Caco-2 (cell line): ENCODE measurements at regions of chr3 and their contacts with region 1.

Region 1: DNA sequence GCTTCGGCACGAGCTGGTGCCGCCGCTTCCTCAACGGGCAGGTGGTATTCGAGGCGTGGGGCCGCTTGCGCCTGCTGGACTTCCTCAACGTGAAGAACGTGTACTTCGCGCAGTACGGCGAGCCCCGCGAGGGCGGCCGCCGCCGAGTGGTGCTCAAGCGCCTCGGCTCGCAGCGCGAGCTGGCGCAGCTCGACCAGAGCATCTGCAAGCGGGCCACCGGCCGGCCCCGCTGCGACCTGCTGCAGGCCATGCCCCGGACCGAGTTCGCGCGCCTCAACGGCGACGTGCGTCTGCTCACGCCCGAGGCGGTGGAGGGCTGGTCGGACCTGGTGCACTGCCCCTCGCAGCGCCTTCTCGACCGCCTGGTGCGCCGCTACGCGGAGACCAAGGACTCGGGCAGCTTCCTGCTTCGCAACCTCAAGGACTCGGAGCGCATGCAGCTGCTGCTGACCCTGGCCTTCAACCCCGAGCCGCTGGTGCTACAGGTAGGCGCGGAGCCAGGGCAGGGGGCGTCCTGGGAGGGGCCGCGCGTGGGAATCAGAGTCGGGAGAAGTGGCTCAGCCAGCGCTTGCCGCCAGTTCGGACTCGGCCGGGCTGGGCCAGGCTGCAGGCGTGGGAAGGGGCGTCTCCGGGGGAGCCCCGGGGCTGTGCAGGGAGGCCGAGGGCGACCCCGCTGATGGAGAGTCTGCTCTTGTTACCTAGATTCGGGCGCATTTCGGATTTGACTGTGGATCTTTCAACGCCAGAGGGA is 1.1 kb downstream of the DIPK2A start:
- DNase-seq: peak; percentile 69 to 71
- H3K4me3 ChIP-seq: peak overlapping the region; percentile 96
- H3K4me3 Mint-ChIP-seq: peak overlapping the region; percentile 89
- H3K27ac Mint-ChIP-seq: peak overlapping the region; percentile 98
- H3K4me1 ChIP-seq: peaks cover 26% of the 10 kb centered on the region
- H3K4me1 Mint-ChIP-seq: peaks cover 7% of the 10 kb centered on the region
- H3K27me3 ChIP-seq: no peaks in the 10 kb centered on the region
- H3K27me3 Mint-ChIP-seq: no peaks in the 10 kb centered on the region
- CTCF ChIP-seq: peak in 1 of 2 experiments; percentile 23

Region 2: GRCh38 chr3:143895805-143896204 is 76.9 kb before region 1 on chr3:
- CTCF ChIA-PET with region 1: interaction called, 3 read pairs
- POLR2A ChIA-PET with region 1: interaction called, 6 read pairs
- intact Hi-C with region 1: loop called (anchors 1 kb)
- DNase-seq: no peak
- H3K4me3 ChIP-seq: no peak overlapping the region
- H3K4me3 Mint-ChIP-seq: no peak overlapping the region
- H3K27ac Mint-ChIP-seq: no peak overlapping the region
- H3K4me1 ChIP-seq: peaks cover 25% of the 10 kb centered on the region
- H3K4me1 Mint-ChIP-seq: peaks cover 20% of the 10 kb centered on the region
- H3K27me3 ChIP-seq: no peaks in the 10 kb centered on the region
- H3K27me3 Mint-ChIP-seq: no peaks in the 10 kb centered on the region
- CTCF ChIP-seq: peak in 1 of 2 experiments; percentile 22

Region 3: GRCh38 chr3:144341471-144341870 is 368.8 kb after region 1 on chr3:
- CTCF ChIA-PET with region 1: interaction called, 4 read pairs
- POLR2A ChIA-PET with region 1: interaction called, 25 read pairs
- intact Hi-C with region 1: loop called (anchors 5 kb)
- DNase-seq: peak; percentile 56 to 66
- H3K4me3 ChIP-seq: peak overlapping the region; percentile 15
- H3K4me3 Mint-ChIP-seq: peak overlapping the region; percentile 66
- H3K27ac Mint-ChIP-seq: peak overlapping the region; percentile 89
- H3K4me1 ChIP-seq: peaks cover 50% of the 10 kb centered on the region
- H3K4me1 Mint-ChIP-seq: peaks cover 21% of the 10 kb centered on the region
- H3K27me3 ChIP-seq: no peaks in the 10 kb centered on the region
- H3K27me3 Mint-ChIP-seq: no peaks in the 10 kb centered on the region
- CTCF ChIP-seq: no peak

Region 4: DNA sequence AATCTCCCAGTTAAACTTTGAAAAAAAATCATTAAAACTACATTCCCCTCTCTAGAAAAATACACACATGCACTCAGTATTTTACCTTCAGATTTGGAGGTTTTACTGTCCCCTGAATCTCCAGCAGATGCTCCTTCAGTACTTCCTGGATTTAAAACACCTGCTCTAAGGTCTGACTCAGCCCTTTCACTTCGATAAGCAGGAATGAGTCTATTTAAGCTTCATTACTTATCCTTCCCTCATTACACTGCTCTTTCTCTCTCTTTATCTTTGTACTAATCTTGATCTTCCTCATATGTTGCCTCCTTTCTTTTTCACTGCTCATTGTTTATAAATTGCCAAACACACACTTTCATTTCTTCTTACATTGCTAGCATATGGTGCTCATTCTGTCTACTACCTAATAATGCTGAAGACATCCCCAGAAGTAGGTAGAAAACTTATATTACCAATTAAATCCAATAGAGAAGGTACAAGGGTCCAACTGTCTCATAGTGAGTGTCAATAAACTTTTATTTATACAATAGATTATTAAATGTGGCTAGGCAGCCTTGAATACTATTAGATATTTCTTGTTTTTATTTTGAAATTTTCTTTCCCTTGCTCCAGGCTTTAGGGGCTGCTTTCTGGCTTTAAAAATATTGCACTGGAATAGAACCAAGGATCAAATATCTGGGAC is 443.0 kb after region 1 on chr3:
- CTCF ChIA-PET with region 1: no interaction called
- POLR2A ChIA-PET with region 1: no interaction called
- intact Hi-C with region 1: loop called (anchors 10 kb)
- DNase-seq: no peak
- H3K4me3 ChIP-seq: no peak overlapping the region
- H3K4me3 Mint-ChIP-seq: no peak overlapping the region
- H3K27ac Mint-ChIP-seq: no peak overlapping the region
- H3K4me1 ChIP-seq: no peaks in the 10 kb centered on the region
- H3K4me1 Mint-ChIP-seq: no peaks in the 10 kb centered on the region
- H3K27me3 ChIP-seq: no peaks in the 10 kb centered on the region
- H3K27me3 Mint-ChIP-seq: no peaks in the 10 kb centered on the region
- CTCF ChIP-seq: no peak

Region 5: GRCh38 chr3:144556392-144556791 is 583.7 kb after region 1 on chr3:
- CTCF ChIA-PET with region 1: no interaction called
- POLR2A ChIA-PET with region 1: interaction called, 3 read pairs
- intact Hi-C with region 1: loop called (anchors 10 kb)
- DNase-seq: no peak
- H3K4me3 ChIP-seq: no peak overlapping the region
- H3K4me3 Mint-ChIP-seq: no peak overlapping the region
- H3K27ac Mint-ChIP-seq: no peak overlapping the region
- H3K4me1 ChIP-seq: peaks cover 26% of the 10 kb centered on the region
- H3K4me1 Mint-ChIP-seq: peaks cover 25% of the 10 kb centered on the region
- H3K27me3 ChIP-seq: no peaks in the 10 kb centered on the region
- H3K27me3 Mint-ChIP-seq: no peaks in the 10 kb centered on the region
- CTCF ChIP-seq: no peak

Region 6: GRCh38 chr3:144770915-144771351 is 798.3 kb after region 1 on chr3:
- CTCF ChIA-PET with region 1: no interaction called
- POLR2A ChIA-PET with region 1: no interaction called
- intact Hi-C with region 1: loop called (anchors 1 kb)
- DNase-seq: peak in 1 of 2 experiments; percentile 41
- H3K4me3 ChIP-seq: no peak overlapping the region
- H3K4me3 Mint-ChIP-seq: no peak overlapping the region
- H3K27ac Mint-ChIP-seq: no peak overlapping the region
- H3K4me1 ChIP-seq: no peaks in the 10 kb centered on the region
- H3K4me1 Mint-ChIP-seq: no peaks in the 10 kb centered on the region
- H3K27me3 ChIP-seq: no peaks in the 10 kb centered on the region
- H3K27me3 Mint-ChIP-seq: peaks cover 4% of the 10 kb centered on the region
- CTCF ChIP-seq: peak; percentile 55 to 61